Heart left ventricle (tissue), 16 donors: ENCODE measurements at regions of chr7 and their contacts with region 1.

Region 1: DNA sequence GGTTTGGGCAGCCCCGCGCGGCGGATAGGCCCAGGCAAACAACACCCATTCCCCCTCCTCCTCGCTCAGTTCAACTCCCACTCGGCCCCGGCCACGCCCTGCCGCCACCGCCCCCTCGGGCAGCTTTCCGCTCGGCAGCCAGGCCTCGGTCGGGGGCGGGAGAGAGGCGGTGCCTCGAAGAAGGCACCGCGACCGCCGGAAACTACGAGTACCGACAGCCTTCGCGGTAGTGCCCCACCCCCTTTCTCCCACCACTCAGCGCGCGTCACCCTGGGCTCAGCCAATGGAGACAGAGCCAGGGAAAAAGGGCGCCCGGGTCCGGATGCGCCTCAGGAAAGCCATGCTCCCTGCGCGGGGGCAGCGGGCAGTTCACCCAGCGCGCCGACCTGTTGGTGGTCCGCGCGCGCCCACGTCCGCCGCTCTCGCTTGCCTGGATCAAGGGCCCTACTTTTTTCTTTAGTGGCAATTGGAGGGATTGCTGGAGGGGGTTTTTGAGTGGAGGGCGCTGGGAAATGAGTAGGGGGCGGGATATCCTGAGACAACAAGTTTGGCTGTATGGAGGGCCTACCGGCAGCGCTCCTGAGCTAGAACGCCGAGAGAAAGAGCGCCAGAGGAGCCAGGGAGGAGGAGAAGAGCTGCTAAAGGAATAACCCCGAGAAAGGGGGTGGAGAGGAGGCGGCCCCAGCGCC is 557 bp upstream of the SP4 start:
- DNase-seq: peak; percentile 99 to 100 (median 99)
- ATAC-seq: peak; percentile 94 to 95 (median 94)
- H3K4me3 ChIP-seq: peak overlapping the region; percentile 42 to 98 (median 88)
- H3K27ac ChIP-seq: peak overlapping the region; percentile 60 to 99 (median 94)
- H3K4me1 ChIP-seq: peaks cover 0 to 46% (median 34%) of the 10 kb centered on the region in 12 donors
- H3K27me3 ChIP-seq: no peaks in the 10 kb centered on the region
- CTCF ChIP-seq: peak in 7 of 12 donors; percentile 4 to 43 (median 20)
- POLR2A ChIP-seq: peak in 1 of 2 donors; percentile 69

Region 2: DNA sequence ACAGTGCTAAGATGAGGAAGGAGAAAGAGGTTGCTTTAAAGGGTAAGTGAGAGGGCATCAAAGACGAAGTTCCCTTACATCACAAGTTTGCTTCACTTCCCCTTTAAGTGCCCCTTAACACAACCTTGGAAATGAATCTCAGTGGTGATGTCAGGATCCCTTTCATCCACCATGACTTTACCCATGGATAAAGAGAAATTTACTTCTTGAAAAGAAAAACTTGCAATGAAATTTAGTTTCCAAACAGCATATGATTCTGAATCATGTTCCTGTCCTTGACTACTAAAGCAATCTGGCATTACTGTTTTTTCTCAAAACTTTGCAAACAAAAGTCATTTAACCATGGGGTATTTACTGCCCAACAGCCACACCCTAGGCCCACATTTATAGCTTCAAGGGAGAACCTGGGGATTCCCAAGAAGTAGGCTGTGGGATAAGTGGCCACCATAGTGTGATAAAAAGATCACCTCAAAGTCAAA is 960.7 kb before region 1 on chr7:
- intact Hi-C with region 1: no loop called
- DNase-seq: no peak
- ATAC-seq: peak in 2 of 4 donors; percentile 37 to 42
- H3K4me3 ChIP-seq: no peak overlapping the region
- H3K27ac ChIP-seq: peak overlapping the region in 1 of 12 donors; percentile 27
- H3K4me1 ChIP-seq: peaks cover 0 to 10% (median 0%) of the 10 kb centered on the region in 12 donors
- H3K27me3 ChIP-seq: no peaks in the 10 kb centered on the region
- CTCF ChIP-seq: no peak
- POLR2A ChIP-seq: no peak

Region 3: GRCh38 chr7:21086688-21087087 is 340.6 kb before region 1 on chr7:
- intact Hi-C with region 1: no loop called
- DNase-seq: no peak
- ATAC-seq: no peak
- H3K4me3 ChIP-seq: no peak overlapping the region
- H3K27ac ChIP-seq: no peak overlapping the region
- H3K4me1 ChIP-seq: no peaks in the 10 kb centered on the region
- H3K27me3 ChIP-seq: no peaks in the 10 kb centered on the region
- CTCF ChIP-seq: no peak
- POLR2A ChIP-seq: no peak

Region 4: GRCh38 chr7:21140622-21141021 is 286.7 kb before region 1 on chr7:
- intact Hi-C with region 1: no loop called
- DNase-seq: no peak
- ATAC-seq: no peak
- H3K4me3 ChIP-seq: no peak overlapping the region
- H3K27ac ChIP-seq: no peak overlapping the region
- H3K4me1 ChIP-seq: no peaks in the 10 kb centered on the region
- H3K27me3 ChIP-seq: peaks cover 0 to 7% (median 0%) of the 10 kb centered on the region in 9 donors
- CTCF ChIP-seq: no peak
- POLR2A ChIP-seq: no peak

Region 5: GRCh38 chr7:21338728-21339164 is 88.6 kb before region 1 on chr7:
- intact Hi-C with region 1: no loop called
- DNase-seq: no peak
- ATAC-seq: no peak
- H3K4me3 ChIP-seq: no peak overlapping the region
- H3K27ac ChIP-seq: peak overlapping the region in 1 of 12 donors; percentile 59
- H3K4me1 ChIP-seq: no peaks in the 10 kb centered on the region
- H3K27me3 ChIP-seq: no peaks in the 10 kb centered on the region
- CTCF ChIP-seq: no peak
- POLR2A ChIP-seq: no peak

Region 6: GRCh38 chr7:22082886-22083703 is 655.8 kb after region 1 on chr7:
- intact Hi-C with region 1: loop called in 2 of 10 experiments (anchors 5 to 10 kb)
- DNase-seq: peak; percentile 87 to 94 (median 90)
- ATAC-seq: peak; percentile 89 to 99 (median 98)
- H3K4me3 ChIP-seq: peak overlapping the region; percentile 41 to 81 (median 66)
- H3K27ac ChIP-seq: peak overlapping the region; percentile 15 to 87 (median 80)
- H3K4me1 ChIP-seq: peaks cover 0 to 17% (median 7%) of the 10 kb centered on the region in 12 donors
- H3K27me3 ChIP-seq: peaks cover 0 to 24% (median 0%) of the 10 kb centered on the region in 9 donors
- CTCF ChIP-seq: peak; percentile 94 to 99 (median 98)
- POLR2A ChIP-seq: no peak